Activated B cell treated with CpG ODN at 0.5 μM for 24 hours (primary cell): ENCODE measurements at regions of chrX and their contacts with region 1.

Region 1: DNA sequence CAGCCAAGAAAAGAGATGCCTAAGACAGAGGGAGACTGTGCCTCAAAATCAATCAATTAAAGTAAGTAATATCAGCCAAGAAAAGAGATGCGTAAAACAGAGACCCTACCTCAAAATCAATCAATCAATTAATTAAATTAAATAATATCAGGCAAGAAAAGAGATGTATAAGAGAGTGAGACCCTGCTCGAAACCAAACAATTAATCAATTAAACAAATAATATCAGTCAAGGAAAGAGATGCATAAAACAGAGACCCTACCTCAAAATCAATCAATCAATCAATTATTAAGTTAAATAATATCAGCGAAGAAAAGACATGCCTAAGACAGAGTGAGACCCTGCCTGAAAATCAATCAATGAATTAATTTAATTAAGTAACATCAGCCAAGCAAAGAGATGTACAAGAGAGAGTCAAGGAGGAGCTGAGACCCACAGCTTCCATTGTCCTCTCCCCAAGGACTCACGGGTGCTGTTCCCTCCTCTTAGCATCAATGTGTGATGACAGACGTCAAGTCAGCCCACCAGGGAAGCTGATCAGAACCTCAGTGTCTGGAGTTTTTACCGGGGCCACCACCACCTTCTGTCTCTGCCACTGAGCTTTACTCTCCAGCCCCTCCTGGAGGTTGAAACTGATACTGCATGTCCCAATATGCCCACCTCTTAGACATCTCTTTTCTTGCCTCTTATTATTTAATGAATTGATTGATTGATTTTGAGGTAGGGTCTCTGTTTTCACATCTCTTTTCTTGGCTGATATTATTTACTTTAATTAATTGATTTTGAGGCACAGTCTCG is 10.5 kb upstream of the AKAP17A start:
- DNase-seq: no peak
- ATAC-seq: peak; percentile 80
- H3K4me3 Mint-ChIP-seq: no peak overlapping the region
- H3K27ac Mint-ChIP-seq: no peak overlapping the region
- H3K4me1 Mint-ChIP-seq: peaks cover 27% of the 10 kb centered on the region
- H3K27me3 Mint-ChIP-seq: no peaks in the 10 kb centered on the region
- CTCF ChIP-seq: peak; percentile 51

Region 2: GRCh38 chrX:1323315-1323714 is 257.6 kb before region 1 on chrX:
- CTCF ChIA-PET with region 1: no interaction called
- POLR2A ChIA-PET with region 1: no interaction called
- intact Hi-C with region 1: loop called (anchors 10 kb)
- DNase-seq: peak; percentile 28
- ATAC-seq: peak; percentile 87
- H3K4me3 Mint-ChIP-seq: peak overlapping the region; percentile 3
- H3K27ac Mint-ChIP-seq: peak overlapping the region; percentile 21
- H3K4me1 Mint-ChIP-seq: peaks cover 13% of the 10 kb centered on the region
- H3K27me3 Mint-ChIP-seq: peaks cover 9% of the 10 kb centered on the region
- CTCF ChIP-seq: no peak